ENCODE measurements at regions of chr12 and their contacts with region 1.

Region 1: GRCh38 chr12:106774005-106774807 is at the start of gene RIC8B:
- DNase-seq: peak; percentile 73 to 84 (median 77)
- H3K4me3 ChIP-seq: peak within 1 kb of the TSS; percentile 55 to 78
- H3K4me3 Mint-ChIP-seq: peak within 1 kb of the TSS; percentile 92 to 98 (median 96)
- H3K27ac ChIP-seq: peak within 1 kb of the TSS; percentile 84
- H3K27ac Mint-ChIP-seq: peak within 1 kb of the TSS; percentile 89 to 99 (median 98)
- H3K4me1 ChIP-seq: peaks cover 32% of the 10 kb centered on the region
- H3K4me1 Mint-ChIP-seq: peaks cover 24 to 51% (median 39%) of the 10 kb centered on the region in 4 donors
- H3K27me3 ChIP-seq: no peaks in the 10 kb centered on the region
- H3K27me3 Mint-ChIP-seq: no peaks in the 10 kb centered on the region
- total RNA-seq, gene RIC8B: 20.8 to 25.0 TPM

Region 2: GRCh38 chr12:106357549-106358395 is 416.4 kb before region 1 on chr12 and contains the start of gene POLR3B:
- CTCF ChIA-PET with region 1: interaction called, 3 read pairs
- POLR2A ChIA-PET with region 1: no interaction called
- intact Hi-C with region 1: loop called (anchors 1 kb)
- DNase-seq: peak; percentile 96 to 98 (median 97)
- H3K4me3 ChIP-seq: peak within 1 kb of the TSS; percentile 77 to 87
- H3K4me3 Mint-ChIP-seq: peak within 1 kb of the TSS; percentile 86 to 95 (median 94)
- H3K27ac ChIP-seq: peak within 1 kb of the TSS; percentile 68
- H3K27ac Mint-ChIP-seq: peak within 1 kb of the TSS; percentile 92 to 97 (median 95)
- H3K4me1 ChIP-seq: peaks cover 20% of the 10 kb centered on the region
- H3K4me1 Mint-ChIP-seq: peaks cover 10 to 20% (median 16%) of the 10 kb centered on the region in 4 donors
- H3K27me3 ChIP-seq: no peaks in the 10 kb centered on the region
- H3K27me3 Mint-ChIP-seq: no peaks in the 10 kb centered on the region
- total RNA-seq, gene POLR3B: 6.6 to 7.5 TPM

Region 3: GRCh38 chr12:106580671-106581508 is 193.3 kb before region 1 on chr12:
- CTCF ChIA-PET with region 1: no interaction called
- POLR2A ChIA-PET with region 1: no interaction called
- intact Hi-C with region 1: no loop called
- DNase-seq: no peak
- H3K4me3 ChIP-seq: no peak overlapping the region
- H3K4me3 Mint-ChIP-seq: peak overlapping the region in 6 of 8 donors; percentile 18 to 64 (median 48)
- H3K27ac ChIP-seq: no peak overlapping the region
- H3K27ac Mint-ChIP-seq: no peak overlapping the region
- H3K4me1 ChIP-seq: peaks cover 17% of the 10 kb centered on the region
- H3K4me1 Mint-ChIP-seq: peaks cover 15 to 51% (median 31%) of the 10 kb centered on the region in 4 donors
- H3K27me3 ChIP-seq: peaks cover 37% of the 10 kb centered on the region
- H3K27me3 Mint-ChIP-seq: peaks cover 57 to 63% of the 10 kb centered on the region in 2 donors

Region 4: GRCh38 chr12:106747973-106748436 is 26.2 kb before region 1 on chr12:
- CTCF ChIA-PET with region 1: no interaction called
- POLR2A ChIA-PET with region 1: interaction called, 11 read pairs
- intact Hi-C with region 1: loop called (anchors 1 kb)
- DNase-seq: peak; percentile 63 to 85 (median 79)
- H3K4me3 ChIP-seq: no peak overlapping the region
- H3K4me3 Mint-ChIP-seq: peak overlapping the region; percentile 23 to 76 (median 56)
- H3K27ac ChIP-seq: peak overlapping the region; percentile 61
- H3K27ac Mint-ChIP-seq: peak overlapping the region; percentile 88 to 99 (median 97)
- H3K4me1 ChIP-seq: peaks cover 46% of the 10 kb centered on the region
- H3K4me1 Mint-ChIP-seq: peaks cover 31 to 54% (median 43%) of the 10 kb centered on the region in 4 donors
- H3K27me3 ChIP-seq: no peaks in the 10 kb centered on the region
- H3K27me3 Mint-ChIP-seq: peaks cover 0 to 1% of the 10 kb centered on the region in 2 donors

Region 5: DNA sequence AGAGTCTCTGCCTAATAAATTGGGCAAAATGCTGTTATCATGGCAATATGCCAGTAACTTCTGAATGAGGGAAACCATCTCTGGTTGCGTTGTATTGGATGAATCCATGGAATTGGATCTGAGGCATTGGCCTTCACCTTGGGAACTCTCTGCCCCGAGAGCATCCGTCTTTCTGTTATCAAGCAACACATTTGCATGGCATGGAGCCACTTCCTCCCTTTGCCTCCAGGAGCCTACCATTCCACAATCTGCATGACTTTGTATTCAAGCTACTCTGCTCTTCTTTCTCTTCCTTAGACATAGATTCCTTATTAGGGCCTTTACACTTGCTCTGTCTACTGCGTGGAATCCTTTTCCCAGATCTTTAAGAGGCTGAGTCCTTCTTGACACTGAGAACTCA is 57.5 kb after region 1 on chr12:
- CTCF ChIA-PET with region 1: no interaction called
- POLR2A ChIA-PET with region 1: no interaction called
- intact Hi-C with region 1: no loop called
- DNase-seq: no peak
- H3K4me3 ChIP-seq: no peak overlapping the region
- H3K4me3 Mint-ChIP-seq: no peak overlapping the region
- H3K27ac ChIP-seq: no peak overlapping the region
- H3K27ac Mint-ChIP-seq: peak overlapping the region in 1 of 7 donors; percentile 58
- H3K4me1 ChIP-seq: no peaks in the 10 kb centered on the region
- H3K4me1 Mint-ChIP-seq: peaks cover 0 to 10% (median 6%) of the 10 kb centered on the region in 4 donors
- H3K27me3 ChIP-seq: no peaks in the 10 kb centered on the region
- H3K27me3 Mint-ChIP-seq: no peaks in the 10 kb centered on the region

Region 6: GRCh38 chr12:106841510-106842302 is 67.5 kb after region 1 on chr12:
- CTCF ChIA-PET with region 1: no interaction called
- POLR2A ChIA-PET with region 1: no interaction called
- intact Hi-C with region 1: no loop called
- DNase-seq: peak; percentile 37 to 47 (median 45)
- H3K4me3 ChIP-seq: no peak overlapping the region
- H3K4me3 Mint-ChIP-seq: no peak overlapping the region
- H3K27ac ChIP-seq: no peak overlapping the region
- H3K27ac Mint-ChIP-seq: peak overlapping the region in 3 of 7 donors; percentile 2 to 57 (median 5)
- H3K4me1 ChIP-seq: peaks cover 17% of the 10 kb centered on the region
- H3K4me1 Mint-ChIP-seq: peaks cover 14 to 28% (median 22%) of the 10 kb centered on the region in 4 donors
- H3K27me3 ChIP-seq: no peaks in the 10 kb centered on the region
- H3K27me3 Mint-ChIP-seq: no peaks in the 10 kb centered on the region

Region 7: GRCh38 chr12:106903241-106903945 is 129.2 kb after region 1 on chr12:
- CTCF ChIA-PET with region 1: no interaction called
- POLR2A ChIA-PET with region 1: no interaction called
- intact Hi-C with region 1: no loop called
- DNase-seq: peak; percentile 56 to 70 (median 59)
- H3K4me3 ChIP-seq: no peak overlapping the region
- H3K4me3 Mint-ChIP-seq: peak overlapping the region; percentile 5 to 83 (median 61)
- H3K27ac ChIP-seq: no peak overlapping the region
- H3K27ac Mint-ChIP-seq: no peak overlapping the region
- H3K4me1 ChIP-seq: peaks cover 9% of the 10 kb centered on the region
- H3K4me1 Mint-ChIP-seq: peaks cover 5 to 10% (median 7%) of the 10 kb centered on the region in 4 donors
- H3K27me3 ChIP-seq: peaks cover 8% of the 10 kb centered on the region
- H3K27me3 Mint-ChIP-seq: peaks cover 7 to 15% of the 10 kb centered on the region in 2 donors

Region 8: GRCh38 chr12:106955377-106956047 is 181.3 kb after region 1 on chr12 and contains the start of gene TMEM263:
- CTCF ChIA-PET with region 1: no interaction called
- POLR2A ChIA-PET with region 1: interaction called, 4 read pairs
- intact Hi-C with region 1: loop called (anchors 1 kb)
- DNase-seq: peak; percentile 89 to 91 (median 90)
- H3K4me3 ChIP-seq: peak within 1 kb of the TSS; percentile 74 to 92
- H3K4me3 Mint-ChIP-seq: peak within 1 kb of the TSS; percentile 92 to 98 (median 96)
- H3K27ac ChIP-seq: peak within 1 kb of the TSS; percentile 76
- H3K27ac Mint-ChIP-seq: peak within 1 kb of the TSS; percentile 93 to 99 (median 96)
- H3K4me1 ChIP-seq: peaks cover 17% of the 10 kb centered on the region
- H3K4me1 Mint-ChIP-seq: peaks cover 20 to 48% (median 25%) of the 10 kb centered on the region in 4 donors
- H3K27me3 ChIP-seq: no peaks in the 10 kb centered on the region
- H3K27me3 Mint-ChIP-seq: no peaks in the 10 kb centered on the region
- total RNA-seq, gene TMEM263: 31.2 to 32.9 TPM

Region 9: GRCh38 chr12:107760809-107761501 is 986.7 kb after region 1 on chr12 and contains the start of gene PRDM4:
- CTCF ChIA-PET with region 1: no interaction called
- POLR2A ChIA-PET with region 1: no interaction called
- intact Hi-C with region 1: loop called (anchors 5 kb)
- DNase-seq: peak; percentile 87 to 94 (median 93)
- H3K4me3 ChIP-seq: peak within 1 kb of the TSS; percentile 77 to 82
- H3K4me3 Mint-ChIP-seq: peak within 1 kb of the TSS; percentile 89 to 95 (median 92)
- H3K27ac ChIP-seq: peak within 1 kb of the TSS; percentile 64
- H3K27ac Mint-ChIP-seq: peak within 1 kb of the TSS; percentile 90 to 98 (median 94)
- H3K4me1 ChIP-seq: peaks cover 41% of the 10 kb centered on the region
- H3K4me1 Mint-ChIP-seq: peaks cover 17 to 45% (median 26%) of the 10 kb centered on the region in 4 donors
- H3K27me3 ChIP-seq: no peaks in the 10 kb centered on the region
- H3K27me3 Mint-ChIP-seq: no peaks in the 10 kb centered on the region
- total RNA-seq, gene PRDM4: 35.8 to 38.3 TPM